ENCODE measurements at regions of chr1 and their contacts with region 1.

Region 1: DNA sequence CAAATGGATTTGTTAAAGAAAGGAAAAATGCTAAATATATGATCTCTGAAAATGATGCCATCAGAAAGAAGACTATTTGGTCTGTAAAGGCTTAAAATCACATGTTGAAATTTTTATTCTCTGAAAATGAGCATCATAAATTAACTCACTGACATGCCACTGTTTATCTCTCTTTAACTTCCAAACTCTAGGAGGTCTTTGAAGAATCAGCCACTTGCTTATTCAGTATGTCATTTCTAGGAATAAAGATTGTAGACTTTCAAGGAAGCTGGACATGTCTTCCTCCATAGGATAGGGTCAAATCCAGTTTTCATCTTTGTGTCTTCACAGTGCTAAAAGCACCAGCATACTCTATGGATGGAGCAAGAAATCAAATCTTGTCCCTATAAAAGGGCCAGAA is 147.6 kb downstream of the FMN2 start:
- DNase-seq: no peak
- H3K4me3 ChIP-seq: no peak overlapping the region
- H3K27ac ChIP-seq: no peak overlapping the region
- H3K27me3 ChIP-seq: no peaks in the 10 kb centered on the region
- CTCF ChIP-seq: no peak

Region 2: DNA sequence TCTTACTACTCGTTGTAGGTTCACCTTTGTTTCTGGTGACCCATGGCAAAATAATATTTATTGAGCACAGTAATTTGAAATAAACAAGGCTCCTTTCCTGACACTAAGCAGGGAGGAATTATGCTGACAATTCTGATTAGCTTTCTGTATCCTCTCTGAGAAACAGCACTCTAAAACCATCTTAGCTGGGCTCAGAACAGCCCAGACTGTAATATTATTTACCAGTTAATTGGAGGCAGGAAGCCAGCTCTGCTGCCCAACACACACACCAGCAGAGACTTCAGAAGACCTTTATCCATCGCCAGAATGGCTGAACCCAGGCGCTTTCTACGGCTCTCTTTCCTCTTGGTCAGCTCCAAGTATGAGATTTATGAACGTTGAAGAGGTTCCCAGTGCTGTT is 225.3 kb before region 1 on chr1:
- intact Hi-C with region 1: no loop called
- DNase-seq: no peak
- H3K4me3 ChIP-seq: no peak overlapping the region
- H3K27ac ChIP-seq: no peak overlapping the region
- H3K27me3 ChIP-seq: peaks cover 0 to 3% (median 0%) of the 10 kb centered on the region in 45 donors
- CTCF ChIP-seq: no peak

Region 3: GRCh38 chr1:240254778-240255291 is 15.5 kb after region 1 on chr1:
- intact Hi-C with region 1: loop called in 1 of 2 experiments (anchors 1 kb)
- DNase-seq: no peak
- H3K4me3 ChIP-seq: no peak overlapping the region
- H3K27ac ChIP-seq: no peak overlapping the region
- H3K27me3 ChIP-seq: no peaks in the 10 kb centered on the region
- CTCF ChIP-seq: no peak